AG04449 (cell line): ENCODE measurements at regions of chr2 and their contacts with region 1.

Region 1: DNA sequence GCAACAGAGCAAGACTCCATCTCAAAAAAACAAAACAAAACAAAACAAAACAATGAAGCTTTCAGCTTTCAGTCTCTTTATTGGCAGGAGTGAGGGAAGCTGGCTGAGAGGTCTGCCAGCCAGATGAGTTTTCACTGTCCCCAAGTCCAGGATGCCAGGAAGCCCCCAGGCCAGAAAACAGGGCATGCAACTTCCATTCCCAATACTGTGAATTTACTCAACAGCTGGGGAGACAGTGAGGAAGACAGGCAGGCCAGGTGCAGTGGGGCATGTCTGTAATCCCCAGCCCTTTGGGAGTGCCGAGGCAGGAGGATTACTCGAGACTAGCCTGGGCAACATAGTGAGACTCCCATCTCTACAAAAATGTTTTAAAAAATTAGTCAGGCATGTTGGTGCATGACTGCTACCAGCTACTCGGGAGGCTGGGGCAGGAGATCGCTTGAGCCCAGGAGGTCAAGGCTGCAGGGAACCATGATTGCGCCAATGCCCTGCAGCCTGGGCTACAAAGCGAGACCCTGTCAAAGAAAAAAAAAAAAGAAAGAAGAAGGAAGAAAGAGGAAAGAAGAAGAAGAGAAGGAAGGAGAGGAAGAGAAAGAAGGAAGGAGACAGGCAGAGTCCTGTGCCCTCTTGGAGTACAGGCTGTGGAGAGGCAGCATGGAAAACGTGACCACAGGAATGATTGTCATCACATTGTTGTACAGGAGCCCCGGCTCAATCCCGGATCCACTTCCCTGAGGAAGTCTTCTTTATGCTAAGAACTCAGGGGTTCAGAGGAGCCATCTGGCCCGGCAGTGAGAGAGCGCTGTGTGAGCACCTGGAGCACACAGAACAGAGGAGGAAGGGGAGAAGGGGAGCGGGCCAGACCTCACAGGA is 29.2 kb upstream of the POMC start:
- DNase-seq: no peak
- H3K4me3 ChIP-seq: no peak overlapping the region
- CTCF ChIP-seq: no peak

Region 2: GRCh38 chr2:24827321-24828237 is 370.0 kb before region 1 on chr2:
- CTCF ChIA-PET with region 1: interaction called, 11 read pairs
- POLR2A ChIA-PET with region 1: no interaction called
- DNase-seq: peak; percentile 61
- H3K4me3 ChIP-seq: no peak overlapping the region
- CTCF ChIP-seq: peak; percentile 89

Region 3: GRCh38 chr2:25041928-25042320 is 155.6 kb before region 1 on chr2 and contains the start of gene EFR3B:
- CTCF ChIA-PET with region 1: no interaction called
- POLR2A ChIA-PET with region 1: no interaction called
- DNase-seq: peak; percentile 24
- H3K4me3 ChIP-seq: peak within 1 kb of the TSS; percentile 65
- CTCF ChIP-seq: no peak

Region 4: GRCh38 chr2:25078171-25079049 is 119.2 kb before region 1 on chr2:
- CTCF ChIA-PET with region 1: no interaction called
- POLR2A ChIA-PET with region 1: no interaction called
- DNase-seq: peak; percentile 23
- H3K4me3 ChIP-seq: no peak overlapping the region
- CTCF ChIP-seq: no peak

Region 5: GRCh38 chr2:25131567-25132298 is 65.8 kb before region 1 on chr2:
- CTCF ChIA-PET with region 1: interaction called, 30 read pairs
- POLR2A ChIA-PET with region 1: no interaction called
- DNase-seq: no peak
- H3K4me3 ChIP-seq: no peak overlapping the region
- CTCF ChIP-seq: no peak

Region 6: DNA sequence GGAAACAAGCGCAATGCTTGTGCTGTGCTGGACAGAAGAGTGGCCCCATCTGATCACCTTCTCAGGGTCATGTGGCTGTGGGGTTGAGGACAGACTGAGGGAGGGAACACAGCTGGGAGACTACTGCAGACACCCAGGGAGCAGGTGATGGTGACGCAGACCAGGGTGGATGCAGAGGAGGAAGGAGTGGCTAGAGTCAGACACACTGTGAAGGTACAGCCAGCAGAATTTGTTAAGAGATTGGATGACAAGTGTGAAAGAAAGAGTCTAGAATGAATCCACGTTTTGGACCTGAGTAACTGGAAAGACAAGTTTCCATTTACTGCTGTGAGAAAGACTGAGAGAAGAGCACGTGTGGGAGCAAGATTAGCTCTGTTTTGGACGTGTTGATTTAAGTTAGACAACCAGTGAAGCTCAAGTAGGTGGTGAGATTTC is 13.3 kb before region 1 on chr2:
- CTCF ChIA-PET with region 1: interaction called, 22 read pairs
- POLR2A ChIA-PET with region 1: no interaction called
- DNase-seq: no peak
- H3K4me3 ChIP-seq: no peak overlapping the region
- CTCF ChIP-seq: no peak